WTC11 (cell line): ENCODE measurements at regions of chr1 and their contacts with region 1.

Region 1: GRCh38 chr1:168234846-168235547 is 9.2 kb downstream of the SFT2D2 start:
- DNase-seq: peak; percentile 43
- ATAC-seq: peak; percentile 100
- H3K4me3 Mint-ChIP-seq: no peak overlapping the region
- H3K27ac Mint-ChIP-seq: no peak overlapping the region
- H3K4me1 Mint-ChIP-seq: no peaks in the 10 kb centered on the region
- H3K27me3 Mint-ChIP-seq: no peaks in the 10 kb centered on the region
- CTCF ChIP-seq: peak; percentile 68

Region 2: GRCh38 chr1:168032029-168032428 is 203.0 kb before region 1 on chr1:
- CTCF ChIA-PET with region 1: no interaction called
- POLR2A ChIA-PET with region 1: no interaction called
- DNase-seq: no peak
- ATAC-seq: no peak
- H3K4me3 Mint-ChIP-seq: no peak overlapping the region
- H3K27ac Mint-ChIP-seq: no peak overlapping the region
- H3K4me1 Mint-ChIP-seq: no peaks in the 10 kb centered on the region
- H3K27me3 Mint-ChIP-seq: no peaks in the 10 kb centered on the region
- CTCF ChIP-seq: no peak

Region 3: GRCh38 chr1:168218658-168219057 is 16.3 kb before region 1 on chr1:
- CTCF ChIA-PET with region 1: interaction called, 22 read pairs
- POLR2A ChIA-PET with region 1: no interaction called
- DNase-seq: no peak
- ATAC-seq: 0 out of 2 replicates have a peak, but pooled peaks have one; percentile 22
- H3K4me3 Mint-ChIP-seq: no peak overlapping the region
- H3K27ac Mint-ChIP-seq: no peak overlapping the region
- H3K4me1 Mint-ChIP-seq: peaks cover 24% of the 10 kb centered on the region
- H3K27me3 Mint-ChIP-seq: no peaks in the 10 kb centered on the region; the same call in 1 of the 2 replicates
- CTCF ChIP-seq: no peak

Region 4: DNA sequence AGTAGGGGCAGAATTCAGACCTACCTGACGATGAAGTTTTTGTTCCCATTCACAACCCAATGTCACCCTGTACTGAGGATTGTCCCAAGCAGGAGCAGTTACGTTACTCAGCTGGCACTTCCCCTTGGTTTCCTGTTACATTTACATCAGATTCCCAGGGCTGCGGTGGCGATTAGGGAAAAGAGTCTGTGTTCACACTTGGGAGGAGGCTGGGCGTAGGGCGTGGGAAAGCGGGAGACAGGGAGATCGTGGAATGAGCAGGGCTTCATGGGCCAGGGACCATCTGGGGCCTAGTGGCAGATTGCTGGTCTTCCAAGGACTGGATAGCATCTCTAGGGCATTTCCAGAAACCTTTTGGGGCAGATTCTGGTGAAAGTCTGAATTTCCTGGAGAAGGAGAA is 84.7 kb after region 1 on chr1:
- CTCF ChIA-PET with region 1: interaction called, 10 read pairs
- POLR2A ChIA-PET with region 1: no interaction called
- DNase-seq: peak; percentile 34
- ATAC-seq: peak; percentile 72
- H3K4me3 Mint-ChIP-seq: no peak overlapping the region
- H3K27ac Mint-ChIP-seq: 0 out of 2 replicates have a peak overlapping the region, but pooled peaks have one; percentile 14
- H3K4me1 Mint-ChIP-seq: peaks cover 23% of the 10 kb centered on the region
- H3K27me3 Mint-ChIP-seq: no peaks in the 10 kb centered on the region
- CTCF ChIP-seq: no peak